Activated CD4-positive, alpha-beta T cell treated with anti-CD3 and anti-CD28 coated beads for 36 hours (primary cell): ENCODE measurements at regions of chr15 and their contacts with region 1.

Region 1: DNA sequence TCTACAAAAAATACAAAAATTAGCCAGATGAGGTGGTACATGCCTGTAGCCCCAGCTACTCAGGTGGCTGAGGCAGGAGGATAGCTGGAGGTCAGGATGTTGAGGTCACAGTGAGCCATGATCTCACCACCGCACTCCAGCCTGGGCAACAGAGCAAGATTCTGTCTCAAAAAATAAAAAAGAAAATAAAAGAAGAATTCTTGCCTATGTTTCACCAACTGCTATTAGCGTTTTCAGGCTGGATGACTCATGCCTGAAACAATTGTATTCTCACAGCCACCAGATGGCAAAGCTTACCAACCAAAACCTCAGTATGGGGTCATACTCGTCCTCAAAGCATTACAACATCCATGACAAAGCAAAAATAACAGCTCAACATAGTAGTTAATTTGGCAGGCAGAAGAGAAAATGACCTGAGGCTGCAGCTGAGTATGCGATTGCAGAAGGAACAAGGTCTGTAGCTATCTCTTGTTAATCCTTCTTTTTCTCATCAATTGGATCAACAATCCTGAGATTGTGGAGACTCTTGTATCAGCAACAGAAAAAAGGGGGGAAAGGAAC is 52.2 kb downstream of the TP53BP1 start:
- DNase-seq: peak; percentile 64
- ATAC-seq: peak; percentile 95
- H3K4me3 Mint-ChIP-seq: no peak overlapping the region
- H3K27ac Mint-ChIP-seq: peak overlapping the region; percentile 91
- H3K4me1 Mint-ChIP-seq: peaks cover 7% of the 10 kb centered on the region
- H3K27me3 Mint-ChIP-seq: no peaks in the 10 kb centered on the region

Region 2: GRCh38 chr15:42920519-42921227 is 520.1 kb before region 1 on chr15 and contains the start of gene TTBK2:
- CTCF ChIA-PET with region 1: no interaction called
- POLR2A ChIA-PET with region 1: no interaction called
- intact Hi-C with region 1: no loop called
- DNase-seq: peak; percentile 98
- ATAC-seq: peak; percentile 95
- H3K4me3 Mint-ChIP-seq: peak within 1 kb of the TSS; percentile 96
- H3K27ac Mint-ChIP-seq: peak within 1 kb of the TSS; percentile 96
- H3K4me1 Mint-ChIP-seq: peaks cover 26% of the 10 kb centered on the region
- H3K27me3 Mint-ChIP-seq: no peaks in the 10 kb centered on the region
- total RNA-seq, gene TTBK2: 9.7 to 10.5 TPM

Region 3: GRCh38 chr15:43492673-43493601 is 52.1 kb after region 1 on chr15 and contains the start of gene TP53BP1:
- CTCF ChIA-PET with region 1: interaction called, 5 read pairs
- POLR2A ChIA-PET with region 1: no interaction called
- intact Hi-C with region 1: loop called in 1 of 2 experiments (anchors 1 kb)
- DNase-seq: peak; percentile 98
- ATAC-seq: peak; percentile 100
- H3K4me3 Mint-ChIP-seq: peak within 1 kb of the TSS; percentile 81
- H3K27ac Mint-ChIP-seq: peak within 1 kb of the TSS; percentile 93
- H3K4me1 Mint-ChIP-seq: peaks cover 30% of the 10 kb centered on the region
- H3K27me3 Mint-ChIP-seq: no peaks in the 10 kb centered on the region
- total RNA-seq, gene TP53BP1: 22.4 to 23.9 TPM

Region 4: DNA sequence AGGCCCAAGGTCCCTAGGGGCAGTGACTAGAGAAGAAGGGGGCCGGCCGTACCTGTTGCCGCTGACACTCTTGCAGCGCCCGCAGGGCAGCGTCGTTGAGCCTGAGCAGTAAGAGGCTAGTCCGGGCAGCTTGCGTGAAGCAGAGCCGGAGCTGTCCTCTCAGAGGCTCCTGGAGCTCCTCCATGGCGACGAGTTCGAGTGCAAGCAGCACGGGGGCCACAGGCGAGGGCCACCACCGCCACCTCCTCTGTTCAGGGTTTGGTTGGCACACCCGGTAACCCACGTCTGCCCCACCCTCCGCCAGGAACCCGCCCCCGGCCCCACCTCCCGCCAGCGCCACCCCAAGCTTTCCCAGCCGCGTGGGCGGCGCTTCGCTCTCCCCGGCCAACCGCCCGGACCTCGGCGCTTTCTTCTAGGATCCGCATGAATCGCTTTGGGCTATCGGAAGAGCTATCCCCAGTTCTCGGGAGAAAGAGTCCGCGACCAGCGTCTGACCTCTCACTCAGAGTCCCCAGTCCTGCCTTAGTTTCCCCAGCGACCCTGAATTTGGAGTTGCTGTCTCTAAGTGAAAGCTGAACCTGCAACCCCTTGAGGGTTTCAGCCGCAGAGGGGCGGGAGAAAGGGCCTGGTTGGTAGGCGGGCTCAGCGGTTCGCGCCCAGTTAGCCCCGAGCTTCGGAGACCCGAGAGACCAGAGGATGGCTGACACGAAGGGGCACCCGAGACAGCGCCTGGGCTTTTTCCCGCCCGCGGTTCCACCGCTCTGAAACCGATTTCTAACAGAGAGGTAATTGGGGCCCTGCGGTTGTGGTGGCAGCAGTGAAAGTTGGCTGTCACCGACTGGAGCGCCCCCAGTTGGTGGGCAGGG is 336.1 kb after region 1 on chr15 and contains the start of gene ELL3:
- CTCF ChIA-PET with region 1: interaction called, 3 read pairs
- POLR2A ChIA-PET with region 1: no interaction called
- intact Hi-C with region 1: loop called in 1 of 2 experiments (anchors 1 kb)
- DNase-seq: peak; percentile 94
- ATAC-seq: peak; percentile 84
- H3K4me3 Mint-ChIP-seq: peak within 1 kb of the TSS; percentile 78
- H3K27ac Mint-ChIP-seq: peak within 1 kb of the TSS; percentile 92
- H3K4me1 Mint-ChIP-seq: peaks cover 19% of the 10 kb centered on the region
- H3K27me3 Mint-ChIP-seq: no peaks in the 10 kb centered on the region
- total RNA-seq, gene ELL3: 3.6 TPM